WTC11 (cell line): ENCODE measurements at regions of chr15 and their contacts with region 1.

Region 1: GRCh38 chr15:90086868-90087268 is 15.4 kb downstream of the IDH2 start:
- DNase-seq: peak; percentile 68
- ATAC-seq: peak; percentile 65
- H3K4me3 Mint-ChIP-seq: no peak overlapping the region
- H3K27ac Mint-ChIP-seq: peak overlapping the region; percentile 75; the same call in 1 of the 2 replicates
- H3K4me1 Mint-ChIP-seq: peaks cover 5% of the 10 kb centered on the region; the same call in 1 of the 2 replicates
- H3K27me3 Mint-ChIP-seq: no peaks in the 10 kb centered on the region
- CTCF ChIP-seq: peak; percentile 59

Region 2: GRCh38 chr15:89888214-89888804 is 198.6 kb before region 1 on chr15:
- CTCF ChIA-PET with region 1: interaction called, 10 read pairs
- POLR2A ChIA-PET with region 1: interaction called, 3 read pairs
- DNase-seq: no peak
- ATAC-seq: peak; percentile 24; the same call in 1 of the 2 replicates
- H3K4me3 Mint-ChIP-seq: no peak overlapping the region
- H3K27ac Mint-ChIP-seq: no peak overlapping the region
- H3K4me1 Mint-ChIP-seq: peaks cover 6% of the 10 kb centered on the region
- H3K27me3 Mint-ChIP-seq: no peaks in the 10 kb centered on the region
- CTCF ChIP-seq: no peak

Region 3: GRCh38 chr15:89893696-89894455 is 193.0 kb before region 1 on chr15 and contains the start of gene AP3S2:
- CTCF ChIA-PET with region 1: interaction called, 36 read pairs
- POLR2A ChIA-PET with region 1: interaction called, 3 read pairs
- DNase-seq: peak; percentile 87
- ATAC-seq: peak; percentile 77
- H3K4me3 Mint-ChIP-seq: peak within 1 kb of the TSS; percentile 99
- H3K27ac Mint-ChIP-seq: peak within 1 kb of the TSS; percentile 99
- H3K4me1 Mint-ChIP-seq: peaks cover 19% of the 10 kb centered on the region
- H3K27me3 Mint-ChIP-seq: no peaks in the 10 kb centered on the region
- CTCF ChIP-seq: no peak
- total RNA-seq, gene AP3S2: 35.7 to 40.0 TPM (median 36.7 TPM) in 3 replicates

Region 4: DNA sequence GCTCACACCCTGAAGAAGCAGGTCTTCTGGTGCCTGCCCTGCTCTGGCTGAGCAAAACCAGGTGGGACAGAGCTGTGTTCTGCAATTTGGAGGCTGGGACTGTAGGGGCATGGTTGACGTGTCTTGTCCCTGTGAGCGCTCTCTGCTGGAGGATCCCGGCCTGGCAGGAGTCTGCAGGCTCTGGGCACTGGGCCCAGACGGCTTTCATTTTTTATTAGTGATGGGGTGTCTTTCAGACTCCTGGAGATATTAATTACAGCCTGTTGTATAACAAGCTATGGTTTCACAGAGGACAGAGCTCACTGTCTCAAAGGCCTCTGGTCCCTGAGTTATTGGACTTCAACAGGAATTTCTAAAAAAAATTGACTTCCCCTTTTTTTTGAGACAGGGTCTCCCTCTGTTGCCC is 115.3 kb before region 1 on chr15:
- CTCF ChIA-PET with region 1: interaction called, 15 read pairs
- POLR2A ChIA-PET with region 1: no interaction called
- DNase-seq: peak; percentile 88
- ATAC-seq: peak; percentile 100
- H3K4me3 Mint-ChIP-seq: no peak overlapping the region
- H3K27ac Mint-ChIP-seq: no peak overlapping the region
- H3K4me1 Mint-ChIP-seq: no peaks in the 10 kb centered on the region
- H3K27me3 Mint-ChIP-seq: peaks cover 12% of the 10 kb centered on the region
- CTCF ChIP-seq: peak; percentile 61; the same call in 1 of the 2 replicates

Region 5: DNA sequence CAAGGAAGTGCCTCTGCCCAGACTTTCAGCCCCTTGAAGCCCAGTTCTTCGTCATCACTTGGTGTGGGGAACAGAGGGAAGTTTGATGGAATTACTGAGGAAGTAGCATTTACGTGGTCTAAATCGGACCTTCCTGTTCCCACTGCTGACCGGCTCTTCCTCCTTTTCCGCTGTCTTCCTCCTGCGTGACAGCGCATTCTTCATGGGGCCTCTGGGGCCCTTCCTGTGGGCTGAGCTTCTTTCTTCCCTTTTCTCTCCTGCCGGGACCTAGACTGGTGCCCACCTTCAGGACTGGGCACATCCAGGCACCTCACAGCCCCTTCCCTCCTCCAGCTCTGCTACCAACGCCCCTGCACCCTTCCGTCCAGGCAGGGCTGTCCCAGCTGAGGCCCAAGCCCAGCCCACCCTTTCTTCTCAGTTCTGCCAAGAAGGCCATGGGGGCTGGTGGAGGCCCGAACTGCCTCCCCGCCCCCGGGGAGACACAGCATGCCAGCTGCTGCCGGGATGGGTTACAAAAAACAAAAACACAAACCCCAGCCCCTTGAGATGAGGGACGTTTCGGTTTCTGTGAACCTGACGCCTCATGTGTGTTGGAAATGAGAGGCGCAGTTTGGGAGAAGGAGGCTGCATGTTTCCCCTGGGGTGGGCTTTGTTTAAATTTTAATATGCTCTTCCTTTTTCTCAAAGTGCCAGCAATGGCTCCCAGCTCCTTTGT is 66.7 kb before region 1 on chr15:
- CTCF ChIA-PET with region 1: interaction called, 3 read pairs
- POLR2A ChIA-PET with region 1: interaction called, 11 read pairs
- DNase-seq: no peak
- ATAC-seq: no peak
- H3K4me3 Mint-ChIP-seq: no peak overlapping the region
- H3K27ac Mint-ChIP-seq: no peak overlapping the region
- H3K4me1 Mint-ChIP-seq: peaks cover 45% of the 10 kb centered on the region
- H3K27me3 Mint-ChIP-seq: no peaks in the 10 kb centered on the region
- CTCF ChIP-seq: no peak

Region 6: GRCh38 chr15:90075420-90076289 is 11.2 kb before region 1 on chr15:
- CTCF ChIA-PET with region 1: interaction called, 25 read pairs
- POLR2A ChIA-PET with region 1: no interaction called
- DNase-seq: peak; percentile 46
- ATAC-seq: peak; percentile 61
- H3K4me3 Mint-ChIP-seq: peak overlapping the region; percentile 5; the same call in 1 of the 2 replicates
- H3K27ac Mint-ChIP-seq: peak overlapping the region; percentile 97
- H3K4me1 Mint-ChIP-seq: peaks cover 14% of the 10 kb centered on the region
- H3K27me3 Mint-ChIP-seq: no peaks in the 10 kb centered on the region
- CTCF ChIP-seq: no peak

Region 7: DNA sequence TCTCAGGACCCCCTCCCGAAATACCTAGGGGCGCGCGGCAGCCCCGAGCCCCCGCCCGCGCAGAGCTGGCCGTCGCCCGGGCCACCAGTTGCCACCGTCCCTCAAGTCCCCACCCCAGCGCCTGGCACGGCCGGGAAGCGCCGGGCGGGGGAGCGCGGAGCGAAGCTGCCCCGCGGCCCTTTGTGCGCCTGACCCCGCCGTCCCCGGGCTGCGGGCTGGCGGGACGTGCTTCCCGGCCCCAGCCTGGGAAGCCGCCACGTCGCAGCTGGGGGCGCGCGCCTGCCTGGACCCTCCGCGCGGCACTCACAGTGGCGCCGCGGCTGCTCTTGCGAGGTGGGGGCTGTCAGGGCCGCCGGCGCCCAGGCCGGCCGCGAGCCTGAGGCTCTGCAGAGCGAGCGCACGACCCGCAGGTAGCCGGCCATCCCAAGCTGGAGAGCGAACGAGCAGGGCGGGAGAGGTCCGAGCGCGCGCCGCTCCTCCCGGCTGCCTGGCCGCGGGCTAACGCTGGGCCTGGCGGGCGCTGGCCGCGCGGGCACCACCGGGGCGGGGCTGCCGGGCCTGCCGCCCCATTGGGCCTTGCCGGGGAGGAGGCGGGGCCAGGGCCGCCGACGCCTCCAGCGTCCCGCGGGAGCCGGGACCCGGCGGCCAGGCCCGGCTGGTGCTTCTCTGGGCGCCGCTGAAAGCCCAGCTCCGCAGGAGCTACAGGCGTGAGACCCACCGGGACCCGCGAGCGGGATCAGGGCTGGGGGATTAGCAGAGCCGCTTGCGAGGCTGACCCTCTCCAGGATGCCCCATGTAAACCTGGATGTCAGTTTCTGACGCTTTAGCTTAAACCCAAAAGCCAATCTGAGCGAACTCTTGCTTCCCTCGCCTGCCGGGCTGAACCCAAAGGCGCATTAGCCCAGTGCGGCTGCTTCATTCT is 15.4 kb after region 1 on chr15 and contains the start of gene IDH2:
- CTCF ChIA-PET with region 1: interaction called, 38 read pairs
- POLR2A ChIA-PET with region 1: interaction called, 4 read pairs
- DNase-seq: peak; percentile 82
- ATAC-seq: peak; percentile 91
- H3K4me3 Mint-ChIP-seq: peak within 1 kb of the TSS; percentile 79
- H3K27ac Mint-ChIP-seq: no peak within 1 kb of the TSS
- H3K4me1 Mint-ChIP-seq: peaks cover 42% of the 10 kb centered on the region
- H3K27me3 Mint-ChIP-seq: peaks cover 41% of the 10 kb centered on the region
- CTCF ChIP-seq: no peak
- total RNA-seq, gene IDH2: 53.3 to 80.3 TPM (median 72.3 TPM) in 3 replicates